ENCODE measurements at regions of chr4 and their contacts with region 1.

Region 1: GRCh38 chr4:81069706-81070331 is 39.3 kb downstream of the BMP3 start:
- DNase-seq: peak; percentile 74
- ATAC-seq: peak; percentile 78
- H3K4me3 Mint-ChIP-seq: no peak overlapping the region
- H3K27ac Mint-ChIP-seq: no peak overlapping the region
- H3K4me1 Mint-ChIP-seq: peaks cover 2% of the 10 kb centered on the region
- H3K27me3 Mint-ChIP-seq: peaks cover 10% of the 10 kb centered on the region

Region 2: DNA sequence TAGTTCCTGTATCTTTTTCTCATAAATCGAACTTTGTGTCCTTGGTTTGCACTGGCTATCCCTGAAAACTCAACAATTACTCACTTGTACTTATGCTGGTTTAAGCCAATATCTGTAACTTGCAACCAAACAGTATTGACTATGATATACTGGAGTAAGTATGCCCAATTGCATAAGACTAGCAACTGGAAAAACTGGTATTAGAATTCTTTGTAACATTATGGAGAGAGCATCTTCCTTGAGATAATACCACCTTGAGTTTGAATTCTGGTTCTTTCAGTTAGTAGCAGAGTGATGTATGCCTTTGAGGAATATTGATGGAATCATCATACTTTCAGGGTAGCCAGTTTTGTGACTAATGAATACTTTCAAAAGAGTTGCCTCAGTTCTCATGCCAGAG is 11.2 kb before region 1 on chr4:
- CTCF ChIA-PET with region 1: interaction called, 14 read pairs
- POLR2A ChIA-PET with region 1: no interaction called
- intact Hi-C with region 1: no loop called
- DNase-seq: no peak
- ATAC-seq: no peak
- H3K4me3 Mint-ChIP-seq: no peak overlapping the region
- H3K27ac Mint-ChIP-seq: no peak overlapping the region
- H3K4me1 Mint-ChIP-seq: no peaks in the 10 kb centered on the region
- H3K27me3 Mint-ChIP-seq: peaks cover 20% of the 10 kb centered on the region

Region 3: DNA sequence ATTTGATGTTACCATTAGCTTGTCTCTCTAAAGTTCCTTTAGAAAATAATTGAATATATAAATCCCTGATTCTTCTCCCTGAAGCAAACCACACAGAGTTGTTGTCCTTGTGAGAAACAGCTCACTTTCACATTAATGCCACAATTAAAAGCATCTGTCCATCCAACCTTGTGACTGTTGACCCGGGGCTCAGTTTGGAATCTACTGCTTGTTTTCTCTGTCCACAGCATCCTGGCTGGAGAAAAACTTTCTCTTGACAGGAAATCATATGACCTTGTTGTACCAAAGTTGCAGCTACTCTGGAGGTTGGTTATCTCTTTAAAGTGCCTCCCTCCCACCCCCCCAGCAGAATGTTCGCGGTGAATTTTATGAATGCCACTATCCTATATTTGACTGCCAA is 142.1 kb after region 1 on chr4:
- CTCF ChIA-PET with region 1: no interaction called
- POLR2A ChIA-PET with region 1: no interaction called
- intact Hi-C with region 1: no loop called
- DNase-seq: no peak
- ATAC-seq: no peak
- H3K4me3 Mint-ChIP-seq: no peak overlapping the region
- H3K27ac Mint-ChIP-seq: no peak overlapping the region
- H3K4me1 Mint-ChIP-seq: peaks cover 13% of the 10 kb centered on the region
- H3K27me3 Mint-ChIP-seq: peaks cover 33% of the 10 kb centered on the region

Region 4: GRCh38 chr4:81260443-81261101 is 190.8 kb after region 1 on chr4:
- CTCF ChIA-PET with region 1: interaction called, 4 read pairs
- POLR2A ChIA-PET with region 1: no interaction called
- intact Hi-C with region 1: loop called (anchors 2 to 5 kb)
- DNase-seq: no peak
- ATAC-seq: no peak
- H3K4me3 Mint-ChIP-seq: no peak overlapping the region
- H3K27ac Mint-ChIP-seq: no peak overlapping the region
- H3K4me1 Mint-ChIP-seq: no peaks in the 10 kb centered on the region
- H3K27me3 Mint-ChIP-seq: peaks cover 8% of the 10 kb centered on the region

Region 5: GRCh38 chr4:81505004-81505598 is 435.3 kb after region 1 on chr4:
- CTCF ChIA-PET with region 1: no interaction called
- POLR2A ChIA-PET with region 1: no interaction called
- intact Hi-C with region 1: no loop called
- DNase-seq: peak; percentile 83
- ATAC-seq: peak; percentile 80
- H3K4me3 Mint-ChIP-seq: peak overlapping the region; percentile 18
- H3K27ac Mint-ChIP-seq: peak overlapping the region; percentile 35
- H3K4me1 Mint-ChIP-seq: peaks cover 40% of the 10 kb centered on the region
- H3K27me3 Mint-ChIP-seq: no peaks in the 10 kb centered on the region

Measured in activated CD4-positive, alpha-beta T cell treated with anti-CD3 and anti-CD28 coated beads for 36 hours (primary cell).